ENCODE measurements at regions of chr11 and their contacts with region 1.

Region 1: GRCh38 chr11:83292709-83293456 is 6.7 kb upstream of the CCDC90B start:
- DNase-seq: peak; percentile 57
- H3K4me3 Mint-ChIP-seq: peak overlapping the region; percentile 58
- H3K27ac Mint-ChIP-seq: no peak overlapping the region
- H3K4me1 Mint-ChIP-seq: peaks cover 11% of the 10 kb centered on the region
- H3K27me3 Mint-ChIP-seq: peaks cover 2% of the 10 kb centered on the region

Region 2: GRCh38 chr11:83306200-83307080 is 13.6 kb after region 1 on chr11:
- CTCF ChIA-PET with region 1: interaction called, 17 read pairs
- intact Hi-C with region 1: no loop called
- DNase-seq: no peak
- H3K4me3 Mint-ChIP-seq: no peak overlapping the region
- H3K27ac Mint-ChIP-seq: no peak overlapping the region
- H3K4me1 Mint-ChIP-seq: no peaks in the 10 kb centered on the region
- H3K27me3 Mint-ChIP-seq: peaks cover 4% of the 10 kb centered on the region

Region 3: DNA sequence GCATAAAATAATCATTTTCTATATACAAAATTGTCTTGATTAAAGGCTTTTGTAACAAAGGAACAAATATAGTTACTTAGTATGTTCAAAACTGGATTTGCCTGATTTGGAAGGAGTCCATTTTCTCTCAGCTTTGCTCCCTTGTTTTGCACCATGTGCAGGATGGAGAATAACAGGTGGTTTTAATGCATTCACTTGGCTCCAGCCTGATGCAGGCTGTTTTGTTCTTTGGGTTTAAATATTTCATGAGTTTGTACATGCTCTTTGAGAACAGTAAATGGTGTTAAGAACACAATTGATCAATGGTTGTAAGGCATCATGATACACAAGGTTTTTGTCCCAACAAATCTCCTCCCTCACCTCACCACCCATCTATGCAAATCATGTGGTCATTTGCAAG is 880.2 kb after region 1 on chr11:
- CTCF ChIA-PET with region 1: no interaction called
- intact Hi-C with region 1: no loop called
- DNase-seq: no peak
- H3K4me3 Mint-ChIP-seq: no peak overlapping the region
- H3K27ac Mint-ChIP-seq: no peak overlapping the region
- H3K4me1 Mint-ChIP-seq: no peaks in the 10 kb centered on the region
- H3K27me3 Mint-ChIP-seq: no peaks in the 10 kb centered on the region

Measured in activated naive CD4-positive, alpha-beta T cell treated with anti-CD3 and anti-CD28 coated beads for 36 hours (primary cell).